Breast epithelium (tissue), 4 donors: ENCODE measurements at regions of chr19 and their contacts with region 1.

Region 1: GRCh38 chr19:45164577-45165335 is 4.0 kb upstream of the NKPD1 start:
- DNase-seq: peak; percentile 80 to 85
- H3K4me3 ChIP-seq: peak overlapping the region in 2 of 3 donors; percentile 0 to 35
- H3K27ac ChIP-seq: peak overlapping the region; percentile 56 to 61
- H3K4me1 ChIP-seq: peaks cover 11 to 16% of the 10 kb centered on the region in 2 donors
- H3K27me3 ChIP-seq: no peaks in the 10 kb centered on the region
- CTCF ChIP-seq: no peak
- POLR2A ChIP-seq: no peak

Region 2: GRCh38 chr19:43446746-43447489 is 1717.8 kb before region 1 on chr19:
- intact Hi-C with region 1: loop called (anchors 5 kb)
- DNase-seq: peak; percentile 65 to 82
- H3K4me3 ChIP-seq: no peak overlapping the region
- H3K27ac ChIP-seq: no peak overlapping the region
- H3K4me1 ChIP-seq: no peaks in the 10 kb centered on the region
- H3K27me3 ChIP-seq: no peaks in the 10 kb centered on the region
- CTCF ChIP-seq: peak; percentile 90 to 97 (median 95)
- POLR2A ChIP-seq: no peak

Region 3: DNA sequence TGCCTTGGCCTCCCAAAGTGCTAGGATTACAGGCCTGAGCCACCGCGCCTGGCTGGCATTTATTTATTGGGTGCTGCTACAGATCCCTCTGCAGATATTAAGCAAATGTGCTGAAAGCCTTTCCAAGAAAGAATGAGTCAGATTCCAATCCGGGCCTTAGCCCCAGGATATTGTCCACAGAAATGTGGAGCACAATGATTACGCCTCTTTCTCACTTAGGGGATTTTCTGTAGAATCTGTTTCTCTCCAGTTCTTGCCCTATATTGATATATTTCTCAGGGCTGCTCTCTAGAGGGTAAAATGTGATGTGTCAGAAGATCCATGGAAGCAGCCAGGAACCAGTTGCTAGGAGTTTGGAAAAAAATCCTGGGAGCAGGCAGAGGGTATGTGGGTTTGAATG is 900.8 kb after region 1 on chr19:
- intact Hi-C with region 1: no loop called
- DNase-seq: peak; percentile 55 to 57
- H3K4me3 ChIP-seq: no peak overlapping the region
- H3K27ac ChIP-seq: no peak overlapping the region
- H3K4me1 ChIP-seq: peaks cover 0 to 10% of the 10 kb centered on the region in 2 donors
- H3K27me3 ChIP-seq: no peaks in the 10 kb centered on the region
- CTCF ChIP-seq: no peak
- POLR2A ChIP-seq: no peak